ENCODE measurements at regions of chr9 and their contacts with region 1.

Region 1: DNA sequence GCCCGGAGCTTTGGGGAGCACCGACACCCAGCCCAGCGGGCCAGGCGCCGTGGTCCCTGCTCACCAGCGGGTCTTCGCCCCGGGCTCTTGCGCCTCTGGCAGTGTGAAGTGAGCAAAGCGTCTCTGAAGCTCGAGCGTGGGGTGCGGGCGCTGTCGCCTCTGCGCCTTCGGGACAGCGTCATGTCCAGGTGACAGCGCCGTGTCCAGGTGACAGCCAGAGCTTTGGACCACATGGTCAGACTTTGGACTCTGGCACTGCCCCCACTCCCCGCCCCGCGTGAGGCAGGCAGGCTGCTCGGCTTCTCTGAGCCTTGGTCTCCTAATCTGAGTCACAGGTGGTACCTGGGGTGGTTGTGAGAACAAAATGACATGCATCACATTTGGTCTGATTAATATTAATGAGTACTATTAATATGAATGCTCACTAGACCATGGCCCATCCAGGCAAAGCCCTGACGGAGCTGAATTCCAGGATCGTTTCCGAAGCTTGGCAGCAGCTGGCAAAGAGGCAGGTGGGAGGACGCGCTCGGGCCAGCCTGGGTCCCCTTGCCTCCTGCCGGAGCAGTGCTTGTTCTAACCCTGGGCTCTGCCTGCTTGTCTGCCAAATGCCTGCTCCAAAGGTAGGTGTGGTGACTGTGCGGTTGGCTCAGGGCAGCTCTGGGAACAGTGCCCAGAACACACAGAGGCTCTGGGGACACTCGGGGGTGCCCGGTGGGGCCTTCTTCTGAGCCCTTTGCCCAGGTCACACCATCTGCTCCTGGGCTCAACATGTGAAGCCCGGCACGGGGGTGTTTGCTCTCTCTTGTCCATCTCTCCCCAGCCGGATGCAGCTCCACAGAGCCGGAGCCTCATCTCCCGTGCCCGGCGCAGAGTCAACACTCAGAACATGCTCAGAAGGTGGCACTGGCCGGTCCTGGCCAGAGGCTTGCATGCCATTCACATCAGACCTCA is 157.1 kb downstream of the OLFM1 start:
- DNase-seq: peak; percentile 68
- ATAC-seq: peak; percentile 67

Region 2: GRCh38 chr9:134887686-134888602 is 356.6 kb before region 1 on chr9:
- intact Hi-C with region 1: no loop called
- DNase-seq: no peak
- ATAC-seq: no peak

Region 3: DNA sequence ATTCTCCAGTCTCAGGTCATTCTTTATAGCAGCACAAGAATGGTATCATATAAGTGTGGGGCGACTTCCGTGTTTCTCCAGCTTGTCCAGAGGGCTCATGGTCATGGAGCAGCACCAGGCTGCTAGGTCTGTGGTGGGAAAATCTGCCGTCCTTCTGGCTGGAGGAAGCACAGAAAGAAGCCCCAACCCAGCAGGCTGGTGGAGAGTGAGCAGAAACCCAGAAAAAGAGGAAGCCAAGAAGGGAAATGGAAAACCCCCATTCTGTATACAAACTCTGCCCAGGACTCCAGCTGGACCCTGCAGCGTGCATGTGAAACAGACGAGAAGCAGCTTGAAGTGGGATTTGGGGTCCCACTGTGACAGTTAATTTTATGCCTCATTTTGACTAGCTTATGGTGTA is 191.4 kb before region 1 on chr9:
- intact Hi-C with region 1: no loop called
- DNase-seq: no peak
- ATAC-seq: no peak

Region 4: DNA sequence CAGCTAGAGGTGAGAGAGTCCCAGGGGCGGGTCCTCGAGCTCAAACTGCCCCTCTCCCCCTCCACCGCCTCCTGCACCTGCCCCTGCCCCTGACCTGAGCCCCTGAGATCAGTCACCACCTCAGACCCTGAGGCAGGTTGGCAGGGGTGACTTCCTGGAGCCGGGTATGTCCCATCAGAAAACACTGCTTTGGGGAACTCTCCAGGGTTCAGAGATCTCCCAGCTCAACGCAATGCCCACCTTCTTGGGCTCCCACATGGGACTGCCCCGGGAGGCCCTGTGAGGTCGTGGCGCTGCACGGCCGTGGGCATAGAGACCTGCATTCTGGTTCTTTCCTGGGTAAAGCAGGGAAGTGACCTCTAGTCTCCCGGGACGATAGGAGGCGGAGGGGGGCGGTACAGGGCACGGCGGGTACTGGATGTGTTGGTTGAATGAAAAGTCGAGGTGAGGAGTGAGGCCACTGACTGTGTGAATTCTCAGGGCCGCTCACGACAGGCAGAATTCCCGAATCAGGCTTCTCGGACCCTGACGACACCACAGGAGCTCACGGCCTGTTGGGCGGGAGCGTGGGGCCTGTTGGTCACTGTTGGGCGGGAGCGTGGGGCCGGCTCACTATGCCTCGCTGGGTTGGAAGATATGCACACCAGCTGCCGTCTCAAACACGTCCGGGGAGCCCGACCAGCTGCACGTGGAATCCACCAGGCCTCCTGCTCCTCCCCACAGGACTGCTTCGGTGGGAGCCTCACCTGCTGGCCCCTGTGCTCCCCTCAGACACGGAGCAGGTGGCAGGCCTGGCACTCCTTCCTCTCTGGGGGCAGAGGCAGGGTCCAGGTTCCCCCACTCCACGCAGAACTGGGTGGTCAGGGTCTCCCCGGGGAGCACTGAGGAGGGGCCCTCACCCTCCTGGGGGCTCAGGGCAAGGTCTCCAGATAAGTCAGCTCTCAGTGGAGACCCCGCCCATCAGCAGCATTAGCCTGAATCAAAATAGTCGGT is 57.0 kb after region 1 on chr9:
- intact Hi-C with region 1: loop called (anchors 2 kb)
- DNase-seq: no peak
- ATAC-seq: no peak